Prostate gland (tissue), 2 donors: ENCODE measurements at regions of chr2 and their contacts with region 1.

Region 1: DNA sequence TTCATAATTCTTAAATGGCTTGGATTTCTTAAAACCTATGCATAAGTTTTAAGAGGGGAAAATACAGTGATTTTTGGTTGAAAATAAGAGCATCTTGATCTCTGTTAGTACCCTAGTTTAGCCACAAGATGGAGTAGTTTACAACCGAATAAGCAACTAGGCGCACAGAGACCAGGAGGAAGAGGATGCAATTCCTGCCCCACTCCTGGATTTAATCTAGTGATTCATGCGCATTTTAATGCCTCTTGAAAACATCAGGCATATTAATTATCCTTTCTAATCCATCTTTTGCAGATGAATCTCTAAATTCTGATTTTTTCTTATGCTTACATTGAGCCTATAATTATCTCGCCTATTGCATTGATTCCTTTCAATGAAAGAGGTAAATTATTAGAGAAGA is 76.7 kb downstream of the MRPS9 start:
- DNase-seq: no peak
- H3K4me3 ChIP-seq: no peak overlapping the region
- H3K27ac ChIP-seq: no peak overlapping the region
- H3K4me1 ChIP-seq: no peaks in the 10 kb centered on the region
- H3K27me3 ChIP-seq: no peaks in the 10 kb centered on the region
- CTCF ChIP-seq: peak; percentile 56 to 84 (median 68)
- POLR2A ChIP-seq: no peak

Region 2: DNA sequence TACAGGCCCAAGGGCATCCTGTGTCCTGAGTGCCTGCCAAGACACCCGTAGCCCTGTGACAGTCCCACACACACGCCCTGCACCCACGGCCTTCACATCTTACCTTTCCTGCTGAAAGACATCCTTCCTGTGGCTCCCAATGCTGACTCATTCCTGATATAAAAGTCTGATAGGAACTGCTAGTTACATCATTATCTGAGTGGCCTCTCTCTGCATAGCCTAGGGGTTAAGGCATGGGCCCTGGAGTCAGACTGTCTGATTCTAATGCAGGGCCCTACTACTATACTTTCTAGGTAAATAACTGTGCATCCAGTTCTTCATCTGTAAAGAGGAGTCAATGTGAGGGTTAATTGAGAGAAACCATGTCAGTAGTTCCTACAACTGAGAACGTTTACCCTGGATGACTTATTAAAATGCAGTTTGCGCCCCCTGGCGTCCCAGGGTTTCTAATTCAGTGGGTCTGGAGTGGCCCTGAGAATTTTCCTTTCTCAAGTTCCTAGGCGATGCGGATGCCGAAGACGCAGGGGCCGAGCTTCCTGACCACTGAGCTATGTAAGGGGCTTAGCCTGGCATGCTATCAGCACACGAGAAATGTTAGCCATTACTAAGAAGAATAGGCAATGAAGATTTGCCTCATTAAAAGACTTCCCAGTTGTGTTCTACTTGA is 121.0 kb after region 1 on chr2:
- intact Hi-C with region 1: loop called (anchors 1 kb)
- DNase-seq: peak; percentile 75
- H3K4me3 ChIP-seq: no peak overlapping the region
- H3K27ac ChIP-seq: no peak overlapping the region
- H3K4me1 ChIP-seq: no peaks in the 10 kb centered on the region
- H3K27me3 ChIP-seq: no peaks in the 10 kb centered on the region
- CTCF ChIP-seq: peak; percentile 40 to 71 (median 62)
- POLR2A ChIP-seq: no peak